HCT116 (cell line): ENCODE measurements at regions of chr5 and their contacts with region 1.

Region 1: GRCh38 chr5:181043285-181044092 is 3.4 kb downstream of the BTNL9 start:
- DNase-seq: no peak
- ATAC-seq: peak; percentile 76
- H3K4me3 ChIP-seq: no peak overlapping the region
- H3K27ac ChIP-seq: no peak overlapping the region
- H3K4me1 ChIP-seq: no peaks in the 10 kb centered on the region
- H3K27me3 ChIP-seq: peaks cover 16% of the 10 kb centered on the region; the same call in 1 of the 2 replicates
- CTCF ChIP-seq: peak; percentile 27 to 35 (median 35); a peak in 3 of 6 replicates
- POLR2A ChIP-seq: no peak
- RAD21 ChIP-seq: peak; percentile 60

Region 2: GRCh38 chr5:181028032-181028819 is 15.3 kb before region 1 on chr5:
- CTCF ChIA-PET with region 1: no interaction called
- POLR2A ChIA-PET with region 1: interaction called, 5 read pairs
- RAD21 ChIA-PET with region 1: interaction called in 1 of 2 experiments, 3 read pairs
- intact Hi-C with region 1: loop called (anchors 2 kb)
- DNase-seq: peak; percentile 90
- ATAC-seq: peak; percentile 96
- H3K4me3 ChIP-seq: peak overlapping the region; percentile 54 to 64
- H3K27ac ChIP-seq: peak overlapping the region; percentile 67
- H3K4me1 ChIP-seq: peaks cover 0 to 16% of the 10 kb centered on the region in 2 experiments; a peak in 2 of 4 replicates
- H3K27me3 ChIP-seq: no peaks in the 10 kb centered on the region
- CTCF ChIP-seq: no peak
- POLR2A ChIP-seq: peak; percentile 99
- RAD21 ChIP-seq: no peak

Region 3: GRCh38 chr5:181159286-181159829 is 115.9 kb after region 1 on chr5:
- CTCF ChIA-PET with region 1: interaction called, 3 read pairs
- POLR2A ChIA-PET with region 1: no interaction called
- RAD21 ChIA-PET with region 1: no interaction called
- intact Hi-C with region 1: loop called (anchors 10 kb)
- DNase-seq: peak; percentile 73
- ATAC-seq: peak; percentile 85
- H3K4me3 ChIP-seq: no peak overlapping the region
- H3K27ac ChIP-seq: peak overlapping the region; percentile 77; the same call in 1 of the 2 replicates
- H3K4me1 ChIP-seq: peaks cover 12 to 34% of the 10 kb centered on the region in 2 experiments
- H3K27me3 ChIP-seq: no peaks in the 10 kb centered on the region
- CTCF ChIP-seq: peak; percentile 91 to 96 (median 91)
- POLR2A ChIP-seq: no peak
- RAD21 ChIP-seq: peak; percentile 92